Activated T-helper 2 cell treated with anti-CD3 and anti-CD28 coated beads, Interferon-gamma antibody, Interleukin-2, Interleukin-4, amounts not matched to agents 10 μg/mL and 5 μg/mL and 100 μg/mL, durations not matched to agents 14 hours and 24 hours and 36 hours (primary cell): ENCODE measurements at regions of chr11 and their contacts with region 1.

Region 1: DNA sequence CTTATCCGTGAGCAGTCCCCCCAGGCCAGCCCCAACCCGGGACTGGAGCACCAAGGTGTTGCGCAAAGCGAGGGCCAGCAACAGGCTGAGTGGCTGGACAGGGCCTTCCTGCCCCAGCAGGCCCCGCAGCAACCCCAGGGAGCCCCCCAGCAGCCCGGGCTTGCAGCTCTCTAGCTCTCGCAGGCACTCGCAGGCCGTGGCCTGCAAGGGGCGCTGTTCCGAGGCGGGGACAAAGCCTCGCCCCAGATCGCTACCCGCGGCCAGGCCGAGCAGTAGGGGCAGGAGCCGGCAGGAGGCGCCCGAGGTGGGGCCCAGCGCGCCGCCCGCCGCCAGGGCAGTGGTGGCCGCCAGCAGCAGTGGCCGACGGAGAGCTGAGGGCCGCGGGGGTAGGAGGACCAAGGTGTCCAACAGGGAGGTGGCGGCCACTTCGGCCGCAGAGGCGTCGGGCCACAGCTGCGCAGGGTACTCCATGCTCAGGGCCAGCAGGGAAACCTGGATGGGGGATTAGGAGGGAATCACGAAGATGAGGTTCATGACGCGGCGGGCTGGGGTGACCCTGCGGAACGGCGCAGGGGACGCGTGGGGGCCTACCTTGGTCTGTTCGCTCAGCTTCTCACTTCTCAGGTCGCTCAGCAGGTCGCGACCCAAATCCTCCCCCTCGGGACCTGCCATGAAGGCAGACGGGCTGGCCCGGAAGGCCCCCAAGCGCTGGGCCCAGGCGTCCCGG is 762 bp downstream of the AP5B1 start:
- DNase-seq: peak; percentile 83
- H3K4me3 Mint-ChIP-seq: peak overlapping the region; percentile 89
- H3K27ac Mint-ChIP-seq: peak overlapping the region; percentile 91
- H3K4me1 Mint-ChIP-seq: peaks cover 25% of the 10 kb centered on the region
- H3K27me3 Mint-ChIP-seq: peaks cover 8% of the 10 kb centered on the region

Region 2: GRCh38 chr11:65791691-65792213 is 11.7 kb after region 1 on chr11:
- intact Hi-C with region 1: loop called (anchors 1 kb)
- DNase-seq: peak; percentile 68
- H3K4me3 Mint-ChIP-seq: no peak overlapping the region
- H3K27ac Mint-ChIP-seq: peak overlapping the region; percentile 55
- H3K4me1 Mint-ChIP-seq: peaks cover 24% of the 10 kb centered on the region
- H3K27me3 Mint-ChIP-seq: peaks cover 21% of the 10 kb centered on the region

Region 3: GRCh38 chr11:65884686-65885092 is 104.7 kb after region 1 on chr11:
- intact Hi-C with region 1: no loop called
- DNase-seq: peak; percentile 77
- H3K4me3 Mint-ChIP-seq: no peak overlapping the region
- H3K27ac Mint-ChIP-seq: peak overlapping the region; percentile 58
- H3K4me1 Mint-ChIP-seq: peaks cover 37% of the 10 kb centered on the region
- H3K27me3 Mint-ChIP-seq: no peaks in the 10 kb centered on the region